GM12878 (cell line): ENCODE measurements at regions of chr5 and their contacts with region 1.

Region 1: GRCh38 chr5:141564216-141564692 is 54.5 kb downstream of the DIAPH1 start:
- DNase-seq: peak; percentile 84
- ATAC-seq: peak; percentile 99
- H3K4me3 ChIP-seq: no peak overlapping the region
- H3K27ac ChIP-seq: peak overlapping the region; percentile 62; the same call in 1 of the 2 replicates
- H3K4me1 ChIP-seq: no peaks in the 10 kb centered on the region
- H3K27me3 ChIP-seq: no peaks in the 10 kb centered on the region
- CTCF ChIP-seq: peak; percentile 64 to 97 (median 93)
- EP300 ChIP-seq: no peak
- POLR2A ChIP-seq: no peak
- RAD21 ChIP-seq: peak; percentile 66

Region 2: GRCh38 chr5:141223112-141223783 is 341.0 kb before region 1 on chr5 and contains the start of gene PCDHB14:
- CTCF ChIA-PET with region 1: interaction called, 10 read pairs
- POLR2A ChIA-PET with region 1: no interaction called
- RAD21 ChIA-PET with region 1: interaction called, 6 read pairs
- SMC1A ChIA-PET with region 1: no interaction called
- in situ Hi-C with region 1: loop called (anchors 25 kb)
- intact Hi-C with region 1: no loop called
- DNase-seq: no peak
- ATAC-seq: no peak
- H3K4me3 ChIP-seq: no peak within 1 kb of the TSS
- H3K27ac ChIP-seq: no peak within 1 kb of the TSS
- H3K4me1 ChIP-seq: no peaks in the 10 kb centered on the region
- H3K27me3 ChIP-seq: no peaks in the 10 kb centered on the region
- CTCF ChIP-seq: peak in 1 of 3 experiments; percentile 25; a peak in 1 of 6 replicates
- EP300 ChIP-seq: no peak
- POLR2A ChIP-seq: no peak
- RAD21 ChIP-seq: peak; percentile 34; the same call in 1 of the 2 replicates
- polyA plus RNA-seq, gene PCDHB14: not detected

Region 3: DNA sequence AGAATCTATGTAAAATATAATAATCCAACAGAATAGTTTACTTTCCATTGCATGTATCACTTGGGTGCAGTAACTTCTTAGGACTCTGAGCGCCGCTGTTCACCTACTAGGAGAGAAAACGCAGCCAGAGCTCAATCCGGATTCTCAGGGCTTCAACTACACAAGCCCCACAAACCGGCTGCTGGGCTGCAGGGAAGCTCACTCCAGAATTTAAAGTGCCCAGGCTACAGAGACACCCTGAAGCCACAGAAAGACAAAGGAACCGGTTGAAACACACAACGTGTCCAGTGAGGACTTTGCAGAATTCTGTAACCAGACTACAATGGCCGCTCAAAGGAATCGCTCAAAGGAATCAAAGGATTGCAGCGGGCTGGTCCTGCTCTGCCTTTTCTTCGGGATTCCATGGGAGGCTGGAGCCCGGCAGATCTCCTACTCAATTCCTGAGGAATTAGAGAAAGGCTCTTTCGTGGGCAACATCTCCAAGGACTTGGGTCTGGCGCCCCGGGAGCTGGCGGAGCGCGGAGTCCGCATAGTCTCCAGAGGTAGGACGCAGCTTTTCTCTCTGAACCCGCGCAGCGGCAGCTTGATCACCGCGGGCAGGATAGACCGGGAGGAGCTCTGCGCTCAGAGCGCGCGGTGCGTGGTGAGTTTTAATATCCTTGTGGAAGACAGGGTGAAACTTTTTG is 151.3 kb before region 1 on chr5 and contains the start of gene PCDHGA10:
- CTCF ChIA-PET with region 1: interaction called, 245 read pairs
- POLR2A ChIA-PET with region 1: interaction called, 8 read pairs
- RAD21 ChIA-PET with region 1: interaction called, 42 read pairs
- SMC1A ChIA-PET with region 1: interaction called, 67 read pairs
- in situ Hi-C with region 1: loop called (anchors 5 kb)
- intact Hi-C with region 1: loop called (anchors 1 kb)
- DNase-seq: peak; percentile 27
- ATAC-seq: peak; percentile 89
- H3K4me3 ChIP-seq: peak within 1 kb of the TSS; percentile 76
- H3K27ac ChIP-seq: no peak within 1 kb of the TSS
- H3K4me1 ChIP-seq: no peaks in the 10 kb centered on the region; the same call in 1 of the 2 replicates
- H3K27me3 ChIP-seq: peaks cover 0 to 1% of the 10 kb centered on the region in 2 experiments; a peak in 1 of 4 replicates
- CTCF ChIP-seq: peak; percentile 81 to 86 (median 83)
- EP300 ChIP-seq: no peak
- POLR2A ChIP-seq: no peak
- RAD21 ChIP-seq: peak; percentile 86
- polyA plus RNA-seq, gene PCDHGA10: 0.58 to 0.68 TPM

Region 4: DNA sequence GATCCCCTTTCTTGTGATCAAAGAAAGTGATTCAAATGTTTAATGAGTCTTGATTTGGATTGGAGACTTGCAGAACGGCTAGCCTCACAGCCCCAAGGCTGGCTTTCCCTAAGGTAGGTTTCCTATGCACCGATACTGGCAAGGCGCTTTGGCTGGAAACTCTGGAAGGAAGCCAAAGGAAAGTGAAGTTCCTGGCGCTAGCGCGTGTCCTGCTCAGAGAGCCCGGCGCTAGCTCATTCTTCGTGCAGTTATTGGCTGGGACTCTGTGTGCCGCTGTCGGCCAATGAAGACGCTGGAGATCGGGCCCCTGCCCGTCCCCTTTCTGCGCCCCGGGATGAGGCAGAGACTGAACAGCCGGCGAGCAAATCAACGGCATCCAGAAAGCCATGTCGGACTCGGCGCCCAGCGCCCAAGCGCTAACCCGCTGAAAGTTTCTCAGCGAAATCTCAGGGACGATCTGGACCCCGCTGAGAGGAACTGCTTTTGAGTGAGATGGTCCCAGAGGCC is 88.6 kb before region 1 on chr5 and contains the start of gene PCDHGC3:
- CTCF ChIA-PET with region 1: interaction called, 71 read pairs
- POLR2A ChIA-PET with region 1: interaction called, 3 read pairs
- RAD21 ChIA-PET with region 1: interaction called, 51 read pairs
- SMC1A ChIA-PET with region 1: interaction called, 44 read pairs
- in situ Hi-C with region 1: no loop called
- intact Hi-C with region 1: loop called (anchors 2 kb)
- DNase-seq: peak; percentile 40
- ATAC-seq: peak; percentile 97
- H3K4me3 ChIP-seq: peak within 1 kb of the TSS; percentile 77
- H3K27ac ChIP-seq: no peak within 1 kb of the TSS; the same call in 1 of the 2 replicates
- H3K4me1 ChIP-seq: peaks cover 17% of the 10 kb centered on the region
- H3K27me3 ChIP-seq: no peaks in the 10 kb centered on the region; a peak in 1 of 4 replicates
- CTCF ChIP-seq: peak; percentile 49 to 86 (median 65); a peak in 5 of 6 replicates
- EP300 ChIP-seq: no peak
- POLR2A ChIP-seq: no peak
- RAD21 ChIP-seq: peak; percentile 77
- polyA plus RNA-seq, gene PCDHGC3: 0.53 to 0.60 TPM

Region 5: DNA sequence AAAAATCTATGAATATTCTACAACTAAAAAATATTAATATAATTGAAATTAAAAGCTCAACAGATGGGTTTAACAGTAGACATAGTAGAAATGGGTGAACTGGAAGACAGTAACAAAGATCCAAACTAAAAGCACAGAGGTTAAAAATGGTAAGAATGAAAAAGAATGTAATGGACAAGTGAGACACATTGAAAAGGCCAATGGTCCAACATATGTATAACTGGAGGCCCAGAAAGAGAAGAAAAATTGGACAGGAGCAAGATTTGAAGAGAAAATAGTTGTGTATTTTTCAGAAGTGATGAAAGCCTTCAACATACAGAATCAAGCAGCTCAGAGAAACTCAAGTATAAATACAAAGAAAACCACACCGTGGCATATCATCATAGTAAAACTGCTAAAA is 16.8 kb before region 1 on chr5:
- CTCF ChIA-PET with region 1: interaction called, 16 read pairs
- POLR2A ChIA-PET with region 1: no interaction called
- RAD21 ChIA-PET with region 1: interaction called, 4 read pairs
- SMC1A ChIA-PET with region 1: interaction called, 5 read pairs
- in situ Hi-C with region 1: no loop called
- intact Hi-C with region 1: no loop called
- DNase-seq: no peak
- ATAC-seq: no peak
- H3K4me3 ChIP-seq: no peak overlapping the region
- H3K27ac ChIP-seq: no peak overlapping the region
- H3K4me1 ChIP-seq: no peaks in the 10 kb centered on the region
- H3K27me3 ChIP-seq: no peaks in the 10 kb centered on the region
- CTCF ChIP-seq: no peak
- EP300 ChIP-seq: no peak
- POLR2A ChIP-seq: no peak
- RAD21 ChIP-seq: no peak

Region 6: GRCh38 chr5:141618804-141619554 is 54.7 kb after region 1 on chr5 and contains the start of gene DIAPH1:
- CTCF ChIA-PET with region 1: interaction called, 22 read pairs
- POLR2A ChIA-PET with region 1: no interaction called
- RAD21 ChIA-PET with region 1: interaction called, 12 read pairs
- SMC1A ChIA-PET with region 1: interaction called, 8 read pairs
- in situ Hi-C with region 1: no loop called
- intact Hi-C with region 1: no loop called
- DNase-seq: peak; percentile 91
- ATAC-seq: peak; percentile 91
- H3K4me3 ChIP-seq: peak within 1 kb of the TSS; percentile 89
- H3K27ac ChIP-seq: peak within 1 kb of the TSS; percentile 84
- H3K4me1 ChIP-seq: peaks cover 16% of the 10 kb centered on the region
- H3K27me3 ChIP-seq: no peaks in the 10 kb centered on the region
- CTCF ChIP-seq: peak; percentile 95 to 99 (median 96); a peak in 5 of 6 replicates
- EP300 ChIP-seq: peak in 1 of 2 experiments; percentile 55; a peak in 2 of 4 replicates
- POLR2A ChIP-seq: peak; percentile 87
- RAD21 ChIP-seq: peak; percentile 80
- polyA plus RNA-seq, gene DIAPH1: 46.3 to 56.0 TPM